Endothelial cell of umbilical vein (primary cell): ENCODE measurements at regions of chr2 and their contacts with region 1.

Region 1: GRCh38 chr2:171160119-171160955 is at the start of gene TLK1:
- DNase-seq: peak; percentile 69
- H3K4me3 ChIP-seq: peak within 1 kb of the TSS; percentile 93 to 100 (median 99)
- H3K27ac ChIP-seq: peak within 1 kb of the TSS; percentile 86
- H3K4me1 ChIP-seq: peaks cover 13% of the 10 kb centered on the region
- H3K27me3 ChIP-seq: no peaks in the 10 kb centered on the region
- CTCF ChIP-seq: no peak
- POLR2A ChIP-seq: no peak
- total RNA-seq, gene TLK1: 53.7 and 62.7 TPM in 2 replicates

Region 2: GRCh38 chr2:170928824-170929685 is 231.3 kb before region 1 on chr2 and contains the start of gene GORASP2:
- CTCF ChIA-PET with region 1: interaction called, 5 read pairs
- POLR2A ChIA-PET with region 1: no interaction called
- dilution Hi-C with region 1: no loop called
- intact Hi-C with region 1: loop called (anchors 1 kb)
- DNase-seq: peak; percentile 99
- H3K4me3 ChIP-seq: peak within 1 kb of the TSS; percentile 80 to 98 (median 91)
- H3K27ac ChIP-seq: peak within 1 kb of the TSS; percentile 70
- H3K4me1 ChIP-seq: peaks cover 16% of the 10 kb centered on the region
- H3K27me3 ChIP-seq: no peaks in the 10 kb centered on the region
- CTCF ChIP-seq: peak; percentile 88 to 99
- POLR2A ChIP-seq: peak; percentile 92
- total RNA-seq, gene GORASP2: 93.7 and 104 TPM in 2 replicates

Region 3: DNA sequence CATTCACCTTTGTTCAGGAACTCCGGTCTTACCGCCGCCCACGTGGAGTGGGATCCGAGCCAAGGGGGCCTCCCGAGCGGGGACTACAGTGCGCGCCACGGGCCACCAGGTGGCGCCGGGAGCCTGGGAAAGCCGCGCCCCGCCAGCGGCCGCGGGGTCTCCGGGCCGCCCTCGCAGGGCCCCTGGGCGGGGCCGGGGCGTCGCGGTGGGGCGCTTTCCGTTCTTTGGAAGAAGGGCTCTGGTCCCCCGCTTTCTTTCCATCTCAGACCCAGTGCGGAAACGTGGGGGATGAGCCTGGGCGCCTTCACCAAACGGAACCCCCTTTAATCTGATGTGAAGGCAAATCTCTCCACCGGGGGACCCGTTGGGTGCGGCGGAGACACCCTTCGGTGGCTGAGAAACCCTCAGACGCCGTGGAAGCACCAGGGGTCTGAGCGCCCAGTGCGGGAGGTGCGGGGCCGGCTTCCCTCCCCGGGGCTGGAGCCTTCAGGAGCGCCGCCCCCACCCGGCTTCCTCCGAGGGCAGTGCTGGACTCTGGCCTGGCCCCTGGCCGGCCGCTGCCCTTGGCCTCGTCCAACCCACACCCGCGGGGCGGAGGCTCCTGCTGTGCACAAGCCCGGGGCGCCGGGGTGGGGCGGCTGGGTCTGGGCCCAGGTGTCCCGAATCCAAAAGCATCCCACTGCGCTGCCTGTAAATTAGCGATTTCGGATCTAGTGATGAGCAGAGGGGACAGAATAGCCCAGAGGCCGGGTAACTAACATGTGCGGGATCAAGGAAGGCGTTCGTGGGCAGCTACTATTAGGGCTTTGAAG is 186.6 kb before region 1 on chr2:
- CTCF ChIA-PET with region 1: interaction called, 47 read pairs
- POLR2A ChIA-PET with region 1: no interaction called
- dilution Hi-C with region 1: no loop called
- intact Hi-C with region 1: loop called (anchors 1 kb)
- DNase-seq: peak; percentile 85
- H3K4me3 ChIP-seq: peak overlapping the region; percentile 54 to 74 (median 69)
- H3K27ac ChIP-seq: peak overlapping the region; percentile 79
- H3K4me1 ChIP-seq: peaks cover 8% of the 10 kb centered on the region
- H3K27me3 ChIP-seq: no peaks in the 10 kb centered on the region
- CTCF ChIP-seq: peak; percentile 83 to 98
- POLR2A ChIP-seq: peak; percentile 67

Region 4: DNA sequence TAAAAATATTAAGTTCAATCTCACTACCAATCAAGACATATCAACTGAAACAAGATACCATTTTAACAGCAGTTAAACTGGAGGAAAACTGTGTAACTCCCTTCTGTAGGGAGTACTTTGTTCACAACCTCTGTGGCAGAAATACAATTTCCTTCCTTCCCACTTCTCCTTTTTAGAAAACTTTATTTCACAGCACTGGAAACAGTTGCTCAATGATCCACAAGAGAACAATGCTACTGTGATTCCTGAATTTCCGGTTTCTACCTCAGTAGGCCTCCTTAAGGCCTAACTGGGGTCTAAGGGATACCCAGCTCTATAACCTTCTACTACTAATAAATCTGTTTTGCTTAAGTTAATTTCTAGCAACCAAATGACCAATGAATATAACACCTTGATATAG is 13.7 kb before region 1 on chr2:
- CTCF ChIA-PET with region 1: interaction called, 22 read pairs
- POLR2A ChIA-PET with region 1: interaction called, 3 read pairs
- dilution Hi-C with region 1: no loop called
- intact Hi-C with region 1: loop called (anchors 1 kb)
- DNase-seq: peak; percentile 83
- H3K4me3 ChIP-seq: peak overlapping the region in 1 of 3 experiments; percentile 26
- H3K27ac ChIP-seq: peak overlapping the region; percentile 71
- H3K4me1 ChIP-seq: peaks cover 29% of the 10 kb centered on the region
- H3K27me3 ChIP-seq: no peaks in the 10 kb centered on the region
- CTCF ChIP-seq: no peak
- POLR2A ChIP-seq: no peak

Region 5: GRCh38 chr2:171407030-171407675 is 246.8 kb after region 1 on chr2:
- CTCF ChIA-PET with region 1: interaction called, 3 read pairs
- POLR2A ChIA-PET with region 1: no interaction called
- dilution Hi-C with region 1: no loop called
- intact Hi-C with region 1: loop called (anchors 2 kb)
- DNase-seq: no peak
- H3K4me3 ChIP-seq: no peak overlapping the region
- H3K27ac ChIP-seq: no peak overlapping the region
- H3K4me1 ChIP-seq: peaks cover 53% of the 10 kb centered on the region
- H3K27me3 ChIP-seq: no peaks in the 10 kb centered on the region
- CTCF ChIP-seq: no peak
- POLR2A ChIP-seq: no peak

Region 6: DNA sequence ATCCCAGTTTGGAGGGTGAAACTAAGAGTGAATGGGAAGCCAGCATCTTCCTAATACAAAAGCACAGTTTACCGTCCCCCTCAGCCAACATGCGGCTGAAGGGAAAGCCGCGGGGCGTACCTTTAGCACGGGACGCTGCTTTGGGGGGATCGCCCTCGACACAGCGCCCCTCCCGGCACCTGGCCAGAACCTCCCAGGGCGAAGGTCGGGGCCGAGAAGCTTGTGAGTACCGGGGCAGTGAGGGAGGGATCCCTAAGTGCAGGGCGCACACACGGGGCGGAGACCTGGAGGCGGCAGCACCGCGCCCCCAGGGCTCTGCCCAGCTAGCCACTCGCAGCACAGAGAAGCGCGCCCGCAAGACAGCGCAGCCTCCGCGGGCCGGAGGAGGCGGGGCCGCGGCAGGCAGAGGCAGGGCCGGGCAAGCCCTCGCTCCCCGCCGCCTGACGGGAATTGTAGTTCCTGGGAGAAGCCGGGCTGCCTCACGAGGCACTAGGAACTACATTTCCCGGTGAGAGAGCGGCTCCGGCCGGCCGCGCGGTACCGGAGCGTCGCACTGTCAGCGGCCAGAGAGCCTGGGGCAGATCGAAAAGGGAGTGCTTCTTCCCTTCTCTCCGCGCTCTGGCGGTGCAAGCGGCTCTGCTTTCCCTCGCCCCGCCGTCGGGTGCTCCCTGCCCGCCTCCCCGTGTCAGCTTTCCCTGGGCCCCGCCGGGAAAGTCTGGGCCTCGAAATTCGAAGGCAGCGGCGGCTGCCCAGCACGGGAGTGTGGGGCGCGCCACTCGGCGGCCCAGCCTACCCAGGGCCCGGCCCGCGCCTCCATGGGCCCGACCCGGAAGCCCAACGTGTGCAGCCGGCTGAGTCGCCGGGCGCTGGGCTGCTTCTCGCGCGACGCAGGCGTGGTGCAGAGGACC is 273.7 kb after region 1 on chr2 and contains the starts of genes DCAF17 and METTL8:
- CTCF ChIA-PET with region 1: interaction called, 3 read pairs
- POLR2A ChIA-PET with region 1: no interaction called
- dilution Hi-C with region 1: no loop called
- intact Hi-C with region 1: loop called (anchors 1 kb)
- DNase-seq: peak; percentile 97
- H3K4me3 ChIP-seq: peak within 1 kb of the TSS; percentile 76 to 87 (median 85)
- H3K27ac ChIP-seq: peak within 1 kb of the TSS; percentile 95
- H3K4me1 ChIP-seq: peaks cover 14% of the 10 kb centered on the region
- H3K27me3 ChIP-seq: no peaks in the 10 kb centered on the region
- CTCF ChIP-seq: peak; percentile 7 to 35
- POLR2A ChIP-seq: peak; percentile 84
- total RNA-seq, gene DCAF17: 14.9 and 15.0 TPM in 2 replicates
- total RNA-seq, gene METTL8: 20.2 and 25.0 TPM in 2 replicates

Region 7: GRCh38 chr2:171522052-171522787 is 361.9 kb after region 1 on chr2 and contains the start of gene CYBRD1:
- CTCF ChIA-PET with region 1: no interaction called
- POLR2A ChIA-PET with region 1: no interaction called
- dilution Hi-C with region 1: no loop called
- intact Hi-C with region 1: loop called (anchors 1 kb)
- DNase-seq: peak; percentile 71
- H3K4me3 ChIP-seq: peak within 1 kb of the TSS; percentile 76 to 96 (median 89)
- H3K27ac ChIP-seq: peak within 1 kb of the TSS; percentile 52
- H3K4me1 ChIP-seq: peaks cover 13% of the 10 kb centered on the region
- H3K27me3 ChIP-seq: no peaks in the 10 kb centered on the region
- CTCF ChIP-seq: no peak
- POLR2A ChIP-seq: peak; percentile 59
- total RNA-seq, gene CYBRD1: 22.8 and 24.8 TPM in 2 replicates